ENCODE measurements at regions of chr3 and their contacts with region 1.

Region 1: DNA sequence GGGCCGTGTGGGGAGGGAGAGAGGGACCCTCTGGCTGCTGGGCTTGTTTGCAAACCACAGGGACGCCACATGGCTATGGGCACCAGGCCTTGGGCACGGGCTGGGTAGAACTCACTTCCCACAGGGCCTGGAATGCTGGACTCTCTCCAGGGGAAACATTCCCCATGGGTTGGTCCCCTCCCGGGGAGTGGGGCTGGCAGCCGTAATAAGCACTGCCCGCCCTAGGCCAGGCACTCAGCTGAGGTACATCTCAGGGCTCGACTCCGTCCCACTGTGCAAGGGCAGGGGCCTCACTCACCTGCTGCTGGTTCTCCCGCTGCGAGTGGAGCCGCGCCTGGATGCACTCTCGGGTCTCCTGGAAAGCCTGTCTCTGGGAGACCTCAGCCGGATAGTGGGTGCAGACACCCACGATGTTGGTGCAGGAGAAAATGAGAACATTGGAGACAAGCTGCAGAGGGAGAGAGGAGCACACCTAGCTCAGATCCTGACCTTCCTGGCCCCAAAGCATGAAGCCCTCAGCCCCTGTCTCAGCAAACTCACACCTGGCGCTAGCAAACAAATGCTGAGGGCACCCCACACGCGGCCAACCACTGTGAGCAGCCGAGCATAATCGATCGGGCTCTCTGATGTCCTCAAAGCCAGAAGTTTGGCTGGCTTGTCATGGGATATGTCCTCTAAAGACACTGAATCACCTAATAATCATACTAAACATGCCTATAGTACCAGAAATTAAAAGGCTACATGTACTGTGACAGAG is 96.6 kb downstream of the ADCY5 start:
- DNase-seq: peak; percentile 80 to 89
- ATAC-seq: peak; percentile 77
- H3K4me3 ChIP-seq: no peak overlapping the region
- H3K27ac ChIP-seq: peak overlapping the region in 1 of 2 donors; percentile 60
- H3K4me1 ChIP-seq: peaks cover 0 to 3% of the 10 kb centered on the region in 2 donors
- H3K27me3 ChIP-seq: no peaks in the 10 kb centered on the region

Region 2: GRCh38 chr3:122800706-122801237 is 551.5 kb before region 1 on chr3:
- intact Hi-C with region 1: no loop called
- DNase-seq: no peak
- ATAC-seq: no peak
- H3K4me3 ChIP-seq: no peak overlapping the region
- H3K27ac ChIP-seq: no peak overlapping the region
- H3K4me1 ChIP-seq: peaks cover 0 to 1% of the 10 kb centered on the region in 2 donors
- H3K27me3 ChIP-seq: no peaks in the 10 kb centered on the region

Region 3: GRCh38 chr3:123365450-123366143 is 13.3 kb after region 1 on chr3:
- intact Hi-C with region 1: no loop called
- DNase-seq: no peak
- ATAC-seq: no peak
- H3K4me3 ChIP-seq: no peak overlapping the region
- H3K27ac ChIP-seq: peak overlapping the region in 1 of 2 donors; percentile 21
- H3K4me1 ChIP-seq: no peaks in the 10 kb centered on the region
- H3K27me3 ChIP-seq: no peaks in the 10 kb centered on the region

Region 4: GRCh38 chr3:123421353-123422174 is 69.3 kb after region 1 on chr3:
- intact Hi-C with region 1: loop called in 1 of 2 experiments (anchors 10 kb)
- DNase-seq: peak; percentile 51 to 88
- ATAC-seq: no peak
- H3K4me3 ChIP-seq: no peak overlapping the region
- H3K27ac ChIP-seq: peak overlapping the region; percentile 7 to 80
- H3K4me1 ChIP-seq: peaks cover 3 to 14% of the 10 kb centered on the region in 2 donors
- H3K27me3 ChIP-seq: no peaks in the 10 kb centered on the region